BJ (cell line): ENCODE measurements at regions of chr20 and their contacts with region 1.

Region 1: GRCh38 chr20:9210356-9210755 is 141.5 kb downstream of the PLCB4 start:
- DNase-seq: no peak
- H3K4me3 ChIP-seq: no peak overlapping the region
- H3K27me3 ChIP-seq: no peaks in the 10 kb centered on the region
- CTCF ChIP-seq: no peak

Region 2: GRCh38 chr20:7859356-7859802 is 1351.0 kb before region 1 on chr20:
- CTCF ChIA-PET with region 1: no interaction called
- POLR2A ChIA-PET with region 1: no interaction called
- DNase-seq: no peak
- H3K4me3 ChIP-seq: no peak overlapping the region
- H3K27me3 ChIP-seq: no peaks in the 10 kb centered on the region; the same call in 1 of the 2 replicates
- CTCF ChIP-seq: peak; percentile 73

Region 3: GRCh38 chr20:9225879-9226278 is 15.5 kb after region 1 on chr20:
- CTCF ChIA-PET with region 1: no interaction called
- POLR2A ChIA-PET with region 1: no interaction called
- DNase-seq: no peak
- H3K4me3 ChIP-seq: no peak overlapping the region
- H3K27me3 ChIP-seq: no peaks in the 10 kb centered on the region
- CTCF ChIP-seq: no peak

Region 4: DNA sequence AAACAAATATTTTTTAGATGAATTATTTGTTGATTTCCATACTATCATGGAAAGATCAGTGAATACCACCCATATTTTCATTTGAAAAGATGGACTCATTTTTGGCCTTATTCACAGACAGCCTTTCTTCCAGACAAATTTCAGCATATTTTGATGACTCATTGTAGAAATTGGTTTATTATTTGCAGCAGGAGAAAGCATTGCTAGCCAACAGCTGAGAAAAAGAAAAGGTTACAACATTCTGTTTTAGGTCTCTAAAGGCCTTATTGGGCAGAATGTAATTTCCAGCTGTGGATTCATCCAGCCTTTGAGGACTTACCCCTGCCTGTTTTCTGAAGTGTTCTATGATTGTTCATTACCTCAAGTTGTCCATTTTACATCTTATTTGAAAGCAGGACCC is 60.5 kb after region 1 on chr20:
- CTCF ChIA-PET with region 1: no interaction called
- POLR2A ChIA-PET with region 1: interaction called, 13 read pairs
- DNase-seq: peak; percentile 62
- H3K4me3 ChIP-seq: no peak overlapping the region
- H3K27me3 ChIP-seq: no peaks in the 10 kb centered on the region
- CTCF ChIP-seq: no peak

Region 5: DNA sequence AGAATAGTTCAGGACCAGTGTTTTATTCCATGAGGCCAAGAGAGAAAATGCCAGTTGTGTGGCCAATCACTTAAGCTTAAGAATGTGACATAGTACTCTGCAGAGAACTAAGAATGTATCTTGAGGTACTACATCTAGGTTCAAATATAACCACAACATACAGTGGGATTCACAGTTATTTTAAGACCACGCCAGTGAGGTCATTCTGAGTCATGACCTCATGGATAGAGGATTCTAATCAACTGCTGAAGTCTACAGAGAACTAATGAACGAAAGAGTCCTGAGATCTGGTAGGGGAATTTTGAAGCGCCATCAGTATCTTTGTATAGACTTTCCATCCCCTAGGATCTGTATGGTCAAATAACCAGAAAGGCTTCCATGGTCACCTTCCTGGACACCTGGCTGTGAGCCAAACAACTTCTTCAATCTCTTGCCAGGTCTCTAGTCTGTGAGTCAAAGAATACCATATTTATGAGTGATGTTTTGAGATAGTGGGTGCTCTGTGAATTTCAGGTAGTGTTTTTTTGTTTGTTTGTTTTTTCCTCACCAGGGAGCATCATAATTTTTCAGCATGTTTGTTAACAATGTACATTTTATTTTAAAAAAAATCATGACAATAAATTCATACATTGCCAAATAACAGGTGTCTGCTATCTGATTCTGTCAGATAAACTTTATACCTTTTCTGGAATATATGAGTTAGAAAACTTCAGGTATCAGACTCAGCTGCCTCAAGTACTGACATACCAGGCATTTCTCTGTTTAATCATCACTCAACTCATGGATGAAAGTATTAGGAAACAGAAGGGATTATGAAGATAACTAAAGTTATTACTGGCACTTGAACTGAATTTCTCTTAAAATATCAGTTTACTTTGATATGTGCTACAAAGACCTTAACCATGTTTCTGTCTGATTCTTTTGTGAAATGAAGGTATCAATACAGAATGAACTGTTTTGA is 76.4 kb after region 1 on chr20:
- CTCF ChIA-PET with region 1: no interaction called
- POLR2A ChIA-PET with region 1: no interaction called
- DNase-seq: no peak
- H3K4me3 ChIP-seq: no peak overlapping the region
- H3K27me3 ChIP-seq: no peaks in the 10 kb centered on the region
- CTCF ChIP-seq: no peak